Activated naive CD4-positive, alpha-beta T cell treated with anti-CD3 and anti-CD28 coated beads, Interleukin-2, amount 10 ng/mL, durations not matched to agents 7 days and 5 days (primary cell): ENCODE measurements at regions of chr1 and their contacts with region 1.

Region 1: GRCh38 chr1:23184212-23184934 is 15.7 kb upstream of the LUZP1 start:
- DNase-seq: peak; percentile 39
- H3K4me3 Mint-ChIP-seq: peak overlapping the region; percentile 38
- H3K27ac Mint-ChIP-seq: no peak overlapping the region
- H3K4me1 Mint-ChIP-seq: peaks cover 3% of the 10 kb centered on the region
- H3K27me3 Mint-ChIP-seq: peaks cover 37% of the 10 kb centered on the region

Region 2: GRCh38 chr1:22963044-22963677 is 221.2 kb before region 1 on chr1:
- CTCF ChIA-PET with region 1: interaction called, 14 read pairs
- DNase-seq: no peak
- H3K4me3 Mint-ChIP-seq: no peak overlapping the region
- H3K27ac Mint-ChIP-seq: no peak overlapping the region
- H3K4me1 Mint-ChIP-seq: no peaks in the 10 kb centered on the region
- H3K27me3 Mint-ChIP-seq: peaks cover 26% of the 10 kb centered on the region

Region 3: DNA sequence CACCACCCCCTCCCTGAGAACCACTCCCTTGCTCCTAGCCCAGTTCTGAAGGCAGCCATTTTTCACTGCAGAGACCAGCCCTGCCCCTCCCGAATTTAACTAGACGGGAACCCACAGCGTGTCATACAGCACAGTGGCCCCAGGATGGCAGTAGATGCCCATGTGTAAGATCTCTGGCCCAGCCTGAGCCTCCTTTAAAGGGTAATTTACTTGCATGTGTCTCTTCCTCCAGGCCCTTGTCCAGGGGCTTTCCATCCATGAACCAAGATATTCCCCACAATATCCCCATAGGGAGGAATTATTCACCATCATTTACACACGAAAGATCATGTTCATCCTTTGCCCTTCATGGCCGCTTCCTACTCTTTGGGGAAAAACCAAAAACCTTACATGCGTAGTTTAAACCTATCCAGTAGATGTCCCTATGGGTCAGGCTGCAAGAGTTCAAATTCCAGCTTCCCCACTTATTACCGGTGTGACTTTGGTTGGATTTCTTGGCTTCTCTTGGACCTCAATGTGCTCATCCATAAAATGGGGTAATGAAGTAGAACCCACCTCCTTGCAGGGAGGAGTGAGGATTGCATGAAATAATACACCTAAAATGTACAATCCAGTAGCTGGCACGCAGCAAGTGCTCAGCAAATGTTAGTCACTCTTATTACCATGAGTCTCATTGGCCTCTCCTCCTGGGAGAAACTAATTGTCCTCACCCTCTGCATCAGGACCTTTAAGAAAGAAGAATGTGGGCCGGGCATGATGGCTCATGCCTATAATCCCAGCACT is 207.7 kb before region 1 on chr1:
- CTCF ChIA-PET with region 1: interaction called, 49 read pairs
- DNase-seq: peak; percentile 70
- H3K4me3 Mint-ChIP-seq: no peak overlapping the region
- H3K27ac Mint-ChIP-seq: no peak overlapping the region
- H3K4me1 Mint-ChIP-seq: no peaks in the 10 kb centered on the region
- H3K27me3 Mint-ChIP-seq: peaks cover 43% of the 10 kb centered on the region

Region 4: GRCh38 chr1:23084880-23085279 is 99.5 kb before region 1 on chr1:
- CTCF ChIA-PET with region 1: interaction called, 23 read pairs
- DNase-seq: no peak
- H3K4me3 Mint-ChIP-seq: no peak overlapping the region
- H3K27ac Mint-ChIP-seq: no peak overlapping the region
- H3K4me1 Mint-ChIP-seq: no peaks in the 10 kb centered on the region
- H3K27me3 Mint-ChIP-seq: no peaks in the 10 kb centered on the region

Region 5: DNA sequence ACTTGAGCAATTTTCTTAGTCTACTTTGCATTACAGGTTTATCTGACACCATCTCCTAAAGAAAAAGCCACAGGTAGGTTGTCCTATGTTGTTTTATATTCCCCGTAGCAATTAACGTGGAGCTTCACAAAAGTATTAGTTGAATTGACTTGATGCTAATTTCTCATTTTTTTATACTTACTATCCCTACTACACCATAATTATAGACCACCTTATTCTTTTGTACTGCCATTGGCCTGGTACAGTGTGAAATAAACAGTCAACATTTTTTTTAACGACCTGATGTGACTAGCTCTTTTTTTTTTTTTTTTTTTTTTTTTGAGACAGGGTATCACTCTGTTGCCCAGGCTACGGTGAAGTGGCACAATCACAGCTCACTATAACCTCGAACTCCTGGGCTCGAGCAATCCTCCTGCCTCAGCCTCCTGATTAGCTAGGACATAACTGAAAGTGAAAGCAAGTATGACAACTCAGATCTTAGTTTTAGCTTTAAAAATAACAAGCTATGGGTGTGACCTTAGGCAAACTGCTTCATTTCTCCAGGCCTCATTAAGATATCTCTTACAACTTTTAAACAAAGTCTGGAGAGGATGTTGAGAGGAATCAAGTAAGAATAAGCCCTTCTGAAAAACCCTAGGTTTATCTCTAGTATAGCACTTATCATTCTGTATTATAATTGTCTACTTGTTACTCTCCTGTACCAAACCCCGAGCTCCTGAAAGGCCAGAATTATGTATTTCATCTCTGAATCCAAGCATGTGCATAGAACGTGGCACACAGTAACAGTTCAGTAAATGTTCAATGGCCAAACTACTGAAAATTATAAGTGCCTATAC is 65.2 kb before region 1 on chr1:
- CTCF ChIA-PET with region 1: interaction called, 23 read pairs
- DNase-seq: peak; percentile 62
- H3K4me3 Mint-ChIP-seq: peak overlapping the region; percentile 48
- H3K27ac Mint-ChIP-seq: peak overlapping the region; percentile 85
- H3K4me1 Mint-ChIP-seq: peaks cover 57% of the 10 kb centered on the region
- H3K27me3 Mint-ChIP-seq: no peaks in the 10 kb centered on the region

Region 6: DNA sequence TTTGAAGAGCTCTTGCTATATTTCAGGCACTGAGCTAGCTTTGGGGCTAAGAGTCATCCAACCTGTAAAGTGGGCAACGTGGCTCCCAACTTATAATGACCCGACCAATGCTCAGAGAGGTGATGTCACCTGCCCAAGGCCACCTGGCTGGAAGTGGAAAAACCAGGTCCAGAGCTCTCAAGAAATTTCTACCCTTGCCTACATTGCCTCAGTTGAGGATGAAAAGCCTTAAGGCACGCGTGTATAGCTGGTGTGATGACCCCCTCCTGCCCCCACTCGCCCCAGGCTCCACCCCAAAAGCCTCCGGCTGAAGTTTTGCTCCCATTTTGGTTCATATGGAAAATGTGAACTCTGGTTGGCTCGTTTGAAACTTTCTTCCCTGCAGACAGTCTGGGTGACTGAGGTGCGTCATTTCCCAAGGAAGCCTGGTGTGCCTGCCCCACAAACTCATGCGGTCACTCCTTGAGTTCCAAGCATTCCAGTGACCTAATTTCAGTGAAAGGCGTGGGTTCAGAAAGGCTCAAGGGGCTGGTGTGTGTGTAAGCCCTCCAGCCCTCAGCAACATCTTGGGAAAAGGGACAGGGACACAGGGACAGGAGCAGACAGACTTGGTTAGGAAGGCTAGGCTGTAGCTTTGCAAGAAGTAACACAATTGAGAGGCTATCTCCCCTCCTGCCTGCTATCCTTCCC is 12.4 kb after region 1 on chr1:
- CTCF ChIA-PET with region 1: interaction called, 30 read pairs
- DNase-seq: no peak
- H3K4me3 Mint-ChIP-seq: no peak overlapping the region
- H3K27ac Mint-ChIP-seq: no peak overlapping the region
- H3K4me1 Mint-ChIP-seq: no peaks in the 10 kb centered on the region
- H3K27me3 Mint-ChIP-seq: peaks cover 33% of the 10 kb centered on the region

Region 7: GRCh38 chr1:23282957-23283356 is 98.6 kb after region 1 on chr1:
- CTCF ChIA-PET with region 1: no interaction called
- DNase-seq: no peak
- H3K4me3 Mint-ChIP-seq: no peak overlapping the region
- H3K27ac Mint-ChIP-seq: no peak overlapping the region
- H3K4me1 Mint-ChIP-seq: no peaks in the 10 kb centered on the region
- H3K27me3 Mint-ChIP-seq: no peaks in the 10 kb centered on the region